Activated T-helper 1 cell treated with anti-CD3 and anti-CD28 coated beads, Interleukin-12 subunit alpha, Interleukin-12 subunit beta, Interleukin-2, Interleukin-4 antibody, amounts not matched to agents 30 ng/mL and 10 ng/mL and 1 ng/mL, durations not matched to agents 14 hours and 24 hours and 36 hours (primary cell): ENCODE measurements at regions of chr17 and their contacts with region 1.

Region 1: DNA sequence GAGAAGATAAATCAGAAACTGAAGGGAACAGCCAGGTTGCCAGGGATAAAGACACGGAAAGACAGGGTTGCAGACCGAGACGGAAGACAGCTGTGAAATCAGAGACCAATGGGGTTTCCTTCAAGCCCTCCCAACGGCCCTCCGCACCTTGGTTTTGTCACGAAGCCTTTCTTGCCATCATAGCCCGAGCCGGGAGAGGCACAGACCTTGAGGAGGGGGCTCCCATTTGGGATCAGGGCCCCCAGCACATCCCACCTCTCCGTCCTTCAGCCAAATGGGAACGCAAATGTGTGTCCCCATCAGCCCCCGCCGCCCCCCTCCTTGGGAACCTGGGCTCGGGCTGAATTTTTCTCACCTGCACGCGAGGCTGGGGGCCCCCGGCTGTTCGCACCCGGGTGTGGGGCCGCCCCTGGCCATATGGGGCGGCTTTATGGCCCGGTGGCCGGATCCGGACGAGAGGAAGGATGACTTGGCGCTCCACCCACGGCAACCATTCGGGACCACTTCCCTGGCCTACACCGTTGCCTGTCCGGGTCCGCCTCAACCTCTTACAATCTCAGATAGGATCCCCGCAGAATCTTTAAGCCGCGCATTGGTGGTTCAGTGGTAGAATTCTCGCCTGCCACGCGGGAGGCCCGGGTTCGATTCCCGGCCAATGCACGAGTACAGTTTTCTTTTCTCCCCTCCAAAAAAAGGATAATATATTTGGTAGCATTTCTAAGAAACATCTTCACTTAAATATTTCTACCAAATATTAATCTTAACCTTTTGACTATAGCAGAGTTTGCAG is 1.4 kb upstream of the HES7 start:
- DNase-seq: peak; percentile 79
- H3K4me3 Mint-ChIP-seq: peak overlapping the region; percentile 91
- H3K27ac Mint-ChIP-seq: peak overlapping the region; percentile 97
- H3K4me1 Mint-ChIP-seq: peaks cover 49% of the 10 kb centered on the region
- H3K27me3 Mint-ChIP-seq: peaks cover 52% of the 10 kb centered on the region

Region 2: DNA sequence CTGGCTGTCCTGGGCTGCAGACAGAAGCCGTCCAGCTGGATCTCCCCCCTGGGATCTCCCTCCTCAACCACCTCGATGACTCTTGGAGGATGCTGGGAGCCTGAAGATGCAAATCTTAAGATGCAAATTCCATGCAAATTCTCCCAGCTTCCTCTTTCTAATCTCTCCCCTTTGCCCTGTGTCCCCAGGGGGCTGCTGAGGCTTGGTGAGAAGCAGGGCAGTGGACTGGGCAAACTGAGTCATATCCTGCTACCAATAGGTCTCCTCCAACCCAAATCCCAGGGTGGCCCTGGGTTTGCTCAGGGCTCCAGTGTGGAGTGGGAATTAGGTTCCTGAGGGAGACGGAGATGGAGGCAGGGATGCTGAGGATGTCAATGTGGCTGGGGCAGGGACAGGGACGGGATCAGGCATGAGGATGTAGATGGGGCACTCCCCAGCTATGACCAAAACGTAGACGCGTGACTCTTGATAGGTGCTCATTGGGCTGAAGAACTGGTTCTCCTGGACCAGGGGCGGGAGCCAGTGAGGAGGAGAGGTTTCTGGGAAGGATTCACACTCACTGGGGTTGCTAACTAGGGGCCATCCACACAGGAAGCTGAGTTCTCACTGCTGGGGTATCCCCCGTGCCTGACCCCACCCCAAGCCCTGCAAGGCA is 34.2 kb before region 1 on chr17:
- intact Hi-C with region 1: no loop called
- DNase-seq: no peak
- H3K4me3 Mint-ChIP-seq: no peak overlapping the region
- H3K27ac Mint-ChIP-seq: no peak overlapping the region
- H3K4me1 Mint-ChIP-seq: peaks cover 14% of the 10 kb centered on the region
- H3K27me3 Mint-ChIP-seq: peaks cover 24% of the 10 kb centered on the region

Region 3: DNA sequence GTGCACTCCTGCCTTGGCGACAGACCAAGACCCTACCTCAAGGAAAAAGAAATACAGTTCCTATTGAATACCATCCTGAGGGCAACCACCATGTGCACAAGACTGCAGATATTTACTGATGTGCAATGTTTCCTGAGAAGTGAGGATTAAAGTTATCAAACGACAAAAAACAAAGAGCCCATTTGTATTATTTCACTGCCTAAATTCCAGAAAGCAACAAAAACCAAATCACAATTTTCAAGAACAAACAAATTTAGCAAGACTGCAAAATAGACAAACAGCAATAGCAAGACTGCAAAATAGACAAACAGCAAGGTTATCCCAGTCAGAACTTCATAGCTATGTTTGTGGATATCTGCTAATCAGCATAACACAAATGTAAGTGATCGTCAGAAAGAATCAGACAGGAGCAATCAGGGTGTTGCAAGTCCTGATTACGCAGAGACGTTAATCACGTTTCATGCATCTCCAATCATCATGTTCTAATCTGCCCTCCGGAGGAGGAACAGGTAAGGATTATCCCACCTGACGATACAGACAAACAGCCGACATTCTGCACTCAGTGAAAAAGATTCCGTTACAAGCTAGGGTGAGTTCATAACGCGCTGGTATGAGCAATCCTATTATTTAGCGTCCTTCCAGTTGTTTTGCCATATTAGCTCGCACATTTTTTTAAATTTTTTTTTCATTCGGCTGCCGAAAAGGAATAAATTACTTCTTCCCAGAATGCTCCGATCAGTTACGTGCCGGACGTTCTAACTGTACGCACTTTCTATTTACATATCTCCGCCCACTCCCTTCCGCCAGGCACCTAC is 47.9 kb after region 1 on chr17:
- intact Hi-C with region 1: loop called (anchors 1 kb)
- DNase-seq: peak; percentile 76
- H3K4me3 Mint-ChIP-seq: peak overlapping the region; percentile 87
- H3K27ac Mint-ChIP-seq: peak overlapping the region; percentile 99
- H3K4me1 Mint-ChIP-seq: peaks cover 45% of the 10 kb centered on the region
- H3K27me3 Mint-ChIP-seq: peaks cover 2% of the 10 kb centered on the region

Region 4: DNA sequence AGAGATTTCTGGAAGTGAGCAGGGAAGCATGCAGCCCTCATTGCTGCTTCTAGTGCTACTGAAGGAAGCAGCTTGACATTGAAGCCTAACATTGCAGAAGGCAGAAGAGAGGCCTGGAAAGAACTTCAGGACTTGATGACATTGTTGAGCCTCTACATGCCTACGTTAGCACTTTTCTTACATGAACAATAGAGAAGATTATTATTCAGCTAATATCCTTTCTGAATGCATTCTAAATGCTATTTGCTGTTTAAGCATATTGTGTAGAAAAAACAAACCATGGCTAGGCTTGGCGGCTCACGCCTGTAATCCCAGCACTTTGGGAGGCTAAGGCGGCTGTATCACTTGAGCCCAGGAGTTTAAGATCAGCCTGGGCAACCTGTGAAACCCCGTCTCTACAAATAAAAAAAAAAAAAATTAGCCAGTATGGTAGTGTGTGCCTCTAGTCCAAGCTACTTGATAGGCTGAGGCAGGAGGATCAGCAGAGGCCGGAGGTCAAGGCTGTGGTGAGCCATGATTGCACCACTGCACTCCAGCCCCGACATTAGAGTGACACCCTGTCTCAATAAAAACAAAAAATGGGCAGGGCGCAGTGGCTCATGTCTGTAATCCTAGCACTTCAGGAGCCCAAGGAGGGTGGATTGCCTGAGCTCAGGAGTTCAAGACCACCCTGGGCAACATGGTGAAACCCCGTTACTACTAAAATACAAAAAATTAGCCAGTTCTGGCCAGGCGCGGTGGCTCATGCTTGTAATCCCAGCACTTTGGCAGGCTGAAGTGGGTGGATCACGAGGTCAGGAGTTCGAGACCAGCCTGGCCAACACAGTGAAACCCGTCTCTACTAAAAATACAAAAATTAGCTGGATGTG is 87.2 kb after region 1 on chr17:
- intact Hi-C with region 1: no loop called
- DNase-seq: no peak
- H3K4me3 Mint-ChIP-seq: no peak overlapping the region
- H3K27ac Mint-ChIP-seq: no peak overlapping the region
- H3K4me1 Mint-ChIP-seq: peaks cover 28% of the 10 kb centered on the region
- H3K27me3 Mint-ChIP-seq: no peaks in the 10 kb centered on the region

Region 5: GRCh38 chr17:8337802-8338752 is 212.7 kb after region 1 on chr17:
- intact Hi-C with region 1: no loop called
- DNase-seq: no peak
- H3K4me3 Mint-ChIP-seq: no peak overlapping the region
- H3K27ac Mint-ChIP-seq: no peak overlapping the region
- H3K4me1 Mint-ChIP-seq: peaks cover 13% of the 10 kb centered on the region
- H3K27me3 Mint-ChIP-seq: peaks cover 8% of the 10 kb centered on the region